Right ventricle myocardium inferior (tissue), 1 donor: ENCODE measurements at regions of chr20 and their contacts with region 1.

Region 1: GRCh38 chr20:36132802-36133211 is 21.7 kb upstream of the EPB41L1 start:
- DNase-seq: no peak
- ATAC-seq: no peak

Region 2: GRCh38 chr20:35878113-35878625 is 254.6 kb before region 1 on chr20:
- intact Hi-C with region 1: no loop called
- DNase-seq: no peak
- ATAC-seq: no peak

Region 3: GRCh38 chr20:35994994-35995453 is 137.8 kb before region 1 on chr20:
- intact Hi-C with region 1: loop called (anchors 1 kb)
- DNase-seq: peak; percentile 90
- ATAC-seq: peak; percentile 96

Region 4: GRCh38 chr20:36064658-36065426 is 68.0 kb before region 1 on chr20:
- intact Hi-C with region 1: loop called (anchors 5 kb)
- DNase-seq: peak; percentile 96
- ATAC-seq: peak; percentile 97

Region 5: GRCh38 chr20:36285746-36286447 is 153.1 kb after region 1 on chr20:
- intact Hi-C with region 1: no loop called
- DNase-seq: no peak
- ATAC-seq: no peak

Region 6: DNA sequence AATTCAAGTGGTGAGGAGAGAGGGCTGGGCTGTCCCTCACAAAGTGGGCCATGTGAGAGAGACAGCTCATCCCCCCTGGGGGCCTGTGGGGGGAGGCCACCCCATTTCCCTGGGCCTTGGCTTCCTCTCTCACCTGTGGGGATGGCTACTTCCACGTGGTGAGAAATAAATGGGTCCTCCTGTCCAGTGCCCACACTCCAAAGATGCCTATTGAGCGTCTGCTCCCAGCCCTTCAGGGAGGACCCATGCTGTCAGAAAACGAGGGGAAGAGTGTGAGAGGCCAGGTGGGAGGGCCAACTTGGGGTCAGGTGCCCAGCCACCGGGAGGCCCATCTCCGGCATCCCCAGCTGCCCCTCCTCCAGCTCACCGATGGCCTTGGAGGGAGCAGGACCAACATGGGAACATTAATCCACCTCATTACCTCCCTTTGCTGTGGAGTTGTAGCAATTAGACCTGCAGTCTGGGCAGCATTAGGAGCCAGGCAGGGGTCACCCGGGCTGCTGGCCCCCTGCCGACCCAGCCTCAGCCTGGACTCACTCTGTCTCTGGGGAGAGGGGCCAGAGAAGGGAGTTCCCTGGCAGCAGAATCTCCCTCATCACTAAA is 198.3 kb after region 1 on chr20:
- intact Hi-C with region 1: no loop called
- DNase-seq: no peak
- ATAC-seq: no peak